ENCODE measurements at regions of chrX and their contacts with region 1.

Region 1: GRCh38 chrX:153599192-153600031 is 473 bp upstream of the CCNQ start:
- DNase-seq: peak; percentile 81
- ATAC-seq: peak; percentile 90
- H3K4me3 ChIP-seq: peak overlapping the region; percentile 94
- H3K27ac ChIP-seq: peak overlapping the region; percentile 80; the same call in 1 of the 2 replicates
- H3K4me1 ChIP-seq: 0 out of 2 replicates have a peak, but pooled peaks cover 3% of the 10 kb centered on the region
- H3K27me3 ChIP-seq: no peaks in the 10 kb centered on the region; the same call in 1 of the 2 replicates
- CTCF ChIP-seq: no peak
- POLR2A ChIP-seq: no peak
- RAD21 ChIP-seq: no peak

Region 2: DNA sequence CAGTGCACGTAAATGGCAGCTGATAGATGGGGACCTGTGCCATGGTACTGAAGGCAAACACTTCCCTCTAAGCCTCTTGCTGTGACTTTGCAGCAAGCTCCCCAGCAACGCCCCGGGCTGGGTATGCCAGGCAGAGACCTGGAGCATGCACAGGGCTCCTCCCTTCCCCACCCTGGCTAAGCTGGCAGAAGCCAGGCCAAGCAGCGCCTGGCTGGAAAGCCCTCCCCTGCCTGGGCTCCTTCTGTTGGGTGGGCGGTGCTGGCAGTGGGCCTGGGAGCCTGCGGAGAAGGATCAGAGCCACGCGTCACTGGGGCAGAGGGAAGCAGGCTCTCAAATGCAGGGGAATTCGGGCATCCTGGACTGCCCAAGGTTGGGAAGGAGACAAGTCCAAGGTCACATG is 78.4 kb before region 1 on chrX:
- CTCF ChIA-PET with region 1: no interaction called
- POLR2A ChIA-PET with region 1: no interaction called
- dilution Hi-C with region 1: no loop called
- in situ Hi-C with region 1: no loop called
- intact Hi-C with region 1: loop called (anchors 2 kb)
- DNase-seq: peak; percentile 45
- ATAC-seq: no peak
- H3K4me3 ChIP-seq: no peak overlapping the region
- H3K27ac ChIP-seq: no peak overlapping the region
- H3K4me1 ChIP-seq: peaks cover 2% of the 10 kb centered on the region; the same call in 1 of the 2 replicates
- H3K27me3 ChIP-seq: peaks cover 31% of the 10 kb centered on the region
- CTCF ChIP-seq: no peak
- POLR2A ChIP-seq: no peak
- RAD21 ChIP-seq: no peak